MCF 10A (cell line): ENCODE measurements at regions of chr5 and their contacts with region 1.

Region 1: GRCh38 chr5:83277953-83278352 is 193.6 kb upstream of the VCAN start:
- DNase-seq: no peak
- H3K4me3 Mint-ChIP-seq: no peak overlapping the region
- H3K27ac Mint-ChIP-seq: no peak overlapping the region
- H3K4me1 Mint-ChIP-seq: peaks cover 21% of the 10 kb centered on the region
- H3K27me3 Mint-ChIP-seq: no peaks in the 10 kb centered on the region
- CTCF ChIP-seq: no peak

Region 2: DNA sequence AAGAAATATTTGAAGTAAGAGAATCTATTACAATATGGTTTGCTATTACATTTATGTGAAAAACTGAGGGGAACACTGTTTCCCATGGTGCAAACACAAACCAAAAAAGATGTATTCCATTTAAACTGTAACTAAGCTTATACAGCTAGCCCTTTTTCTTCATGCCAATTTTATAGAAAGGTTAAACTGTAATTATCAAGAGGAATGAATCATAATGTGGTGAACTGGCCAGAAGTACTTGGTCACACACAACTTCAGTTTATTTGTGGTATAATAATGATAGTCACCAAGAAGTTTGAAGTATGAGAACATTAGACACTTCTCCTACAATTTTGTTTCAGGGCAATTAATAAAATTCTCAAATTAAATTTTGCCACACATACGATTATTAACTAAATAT is 22.7 kb before region 1 on chr5:
- CTCF ChIA-PET with region 1: no interaction called
- POLR2A ChIA-PET with region 1: interaction called, 14 read pairs
- intact Hi-C with region 1: no loop called
- DNase-seq: no peak
- H3K4me3 Mint-ChIP-seq: no peak overlapping the region
- H3K27ac Mint-ChIP-seq: no peak overlapping the region
- H3K4me1 Mint-ChIP-seq: peaks cover 6% of the 10 kb centered on the region
- H3K27me3 Mint-ChIP-seq: no peaks in the 10 kb centered on the region
- CTCF ChIP-seq: no peak

Region 3: GRCh38 chr5:83450183-83450966 is 172.4 kb after region 1 on chr5:
- CTCF ChIA-PET with region 1: no interaction called
- POLR2A ChIA-PET with region 1: no interaction called
- intact Hi-C with region 1: no loop called
- DNase-seq: peak; percentile 39
- H3K4me3 Mint-ChIP-seq: no peak overlapping the region
- H3K27ac Mint-ChIP-seq: no peak overlapping the region
- H3K4me1 Mint-ChIP-seq: peaks cover 10% of the 10 kb centered on the region
- H3K27me3 Mint-ChIP-seq: no peaks in the 10 kb centered on the region
- CTCF ChIP-seq: no peak